ENCODE measurements at regions of chr3 and their contacts with region 1.

Region 1: GRCh38 chr3:161423911-161424522 is 52.7 kb upstream of the SPTSSB start:
- ATAC-seq: peak in 4 of 8 experiments; percentile 35 to 54 (median 40)
- H3K4me3 ChIP-seq: no peak overlapping the region
- H3K27ac ChIP-seq: no peak overlapping the region
- H3K4me1 ChIP-seq: peaks cover 0 to 10% of the 10 kb centered on the region in 2 donors

Region 2: DNA sequence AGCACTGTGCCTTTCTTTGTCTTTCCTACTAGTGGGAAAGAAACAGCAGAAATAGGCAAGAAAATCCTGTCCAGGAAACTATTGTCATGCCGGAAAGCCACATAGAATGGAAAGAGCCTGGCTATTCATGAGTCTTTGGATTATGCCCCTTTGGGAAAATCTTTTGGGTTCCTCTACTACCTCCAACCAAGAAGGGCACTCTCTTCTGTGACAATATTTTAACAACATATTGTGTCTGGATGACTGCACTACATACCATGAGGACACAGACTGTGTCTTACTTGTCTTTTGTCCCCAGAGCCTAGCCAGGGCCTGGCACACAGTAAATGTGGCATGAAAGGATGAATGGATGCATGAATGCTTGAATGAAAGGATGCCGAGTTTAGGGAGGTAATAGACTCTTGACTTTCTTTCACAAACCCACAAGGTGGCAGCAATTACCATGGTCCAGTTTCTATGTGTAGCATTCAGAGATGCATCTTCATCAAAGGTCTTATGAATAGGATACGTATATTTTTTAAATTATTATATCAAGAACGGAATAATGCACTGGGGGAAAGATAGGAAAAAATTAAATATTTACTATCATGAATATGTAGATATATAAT is 716.7 kb before region 1 on chr3:
- in situ Hi-C with region 1: loop called in 5 of 9 experiments (anchors 25 kb)
- ATAC-seq: peak; percentile 52 to 91 (median 72)
- H3K4me3 ChIP-seq: no peak overlapping the region
- H3K27ac ChIP-seq: no peak overlapping the region
- H3K4me1 ChIP-seq: no peaks in the 10 kb centered on the region

Region 3: GRCh38 chr3:160956806-160957205 is 467.2 kb before region 1 on chr3:
- in situ Hi-C with region 1: loop called in 2 of 9 experiments (anchors 25 kb)
- ATAC-seq: peak in 2 of 8 experiments; percentile 72 to 79
- H3K4me3 ChIP-seq: no peak overlapping the region
- H3K27ac ChIP-seq: no peak overlapping the region
- H3K4me1 ChIP-seq: peaks cover 8 to 9% of the 10 kb centered on the region in 2 donors

Region 4: DNA sequence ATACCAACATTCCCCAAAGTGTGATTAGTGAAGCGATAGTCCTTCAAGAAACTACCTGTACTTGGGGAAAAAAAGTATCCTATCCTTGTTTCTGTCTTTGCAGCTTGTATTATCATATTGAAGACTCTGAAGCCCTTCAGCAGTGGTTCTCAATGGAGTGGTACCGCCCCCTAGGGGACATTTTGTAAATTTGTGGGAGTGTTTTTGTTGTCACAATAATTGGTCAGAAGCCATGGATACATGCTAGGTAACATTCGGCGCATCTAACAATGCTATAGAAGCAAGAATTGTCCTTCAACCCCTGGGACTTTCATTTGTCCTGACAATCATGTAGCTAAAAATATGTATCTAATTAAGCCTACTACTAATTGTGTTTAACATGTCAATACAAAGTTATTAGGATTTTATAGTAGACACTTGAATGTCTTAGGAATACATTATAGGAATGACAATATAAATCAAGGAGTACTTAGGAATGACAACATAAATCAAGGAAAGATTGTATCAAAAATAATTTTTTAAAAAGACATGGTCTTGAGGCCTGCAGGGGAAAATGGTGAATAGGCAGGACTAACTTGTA is 149.2 kb before region 1 on chr3:
- in situ Hi-C with region 1: loop called in 2 of 9 experiments (anchors 10 to 25 kb)
- ATAC-seq: peak in 4 of 8 experiments; percentile 38 to 74 (median 50)
- H3K4me3 ChIP-seq: no peak overlapping the region
- H3K27ac ChIP-seq: no peak overlapping the region
- H3K4me1 ChIP-seq: no peaks in the 10 kb centered on the region